Mammary epithelial cell (primary cell): ENCODE measurements at regions of chr2 and their contacts with region 1.

Region 1: GRCh38 chr2:109128048-109128465 is 948 bp upstream of the SH3RF3 start:
- DNase-seq: peak; percentile 50
- H3K4me3 ChIP-seq: peak overlapping the region; percentile 42 to 59 (median 56)
- H3K27ac ChIP-seq: no peak overlapping the region
- H3K4me1 ChIP-seq: peaks cover 42% of the 10 kb centered on the region
- H3K27me3 ChIP-seq: peaks cover 11% of the 10 kb centered on the region
- CTCF ChIP-seq: peak; percentile 72 to 80

Region 2: DNA sequence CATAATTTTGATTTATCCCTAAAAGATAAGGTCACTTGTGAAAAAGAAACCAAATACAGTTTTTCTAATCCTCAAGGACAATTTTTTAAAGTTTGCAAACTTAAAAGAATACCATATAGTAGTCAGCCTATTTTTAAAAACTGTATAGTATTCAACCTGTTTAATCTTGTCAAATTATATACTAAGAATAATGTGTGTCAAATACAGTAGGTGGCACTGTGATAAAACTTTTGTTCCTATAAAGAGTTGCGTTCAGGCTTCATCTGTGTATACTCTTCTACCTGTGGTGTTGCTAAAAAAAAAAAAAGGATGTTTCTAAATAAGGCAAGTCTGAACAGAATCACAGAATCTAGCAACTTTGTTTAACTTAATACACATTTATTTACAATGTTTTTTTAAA is 272.9 kb before region 1 on chr2:
- CTCF ChIA-PET with region 1: interaction called, 7 read pairs
- dilution Hi-C with region 1: no loop called
- in situ Hi-C with region 1: no loop called
- intact Hi-C with region 1: loop called (anchors 2 kb)
- DNase-seq: peak; percentile 37
- H3K4me3 ChIP-seq: no peak overlapping the region
- H3K27ac ChIP-seq: no peak overlapping the region
- H3K4me1 ChIP-seq: no peaks in the 10 kb centered on the region
- H3K27me3 ChIP-seq: no peaks in the 10 kb centered on the region
- CTCF ChIP-seq: peak; percentile 28 to 36

Region 3: GRCh38 chr2:108988796-108989713 is 139.0 kb before region 1 on chr2 and contains the start of gene EDAR:
- CTCF ChIA-PET with region 1: no interaction called
- dilution Hi-C with region 1: no loop called
- in situ Hi-C with region 1: no loop called
- intact Hi-C with region 1: loop called (anchors 10 kb)
- DNase-seq: peak; percentile 70
- H3K4me3 ChIP-seq: peak within 1 kb of the TSS; percentile 35 to 43 (median 39)
- H3K27ac ChIP-seq: no peak within 1 kb of the TSS
- H3K4me1 ChIP-seq: peaks cover 17% of the 10 kb centered on the region
- H3K27me3 ChIP-seq: no peaks in the 10 kb centered on the region
- CTCF ChIP-seq: peak; percentile 89 to 96
- total RNA-seq, gene EDAR: 0.38 to 2.2 TPM

Region 4: DNA sequence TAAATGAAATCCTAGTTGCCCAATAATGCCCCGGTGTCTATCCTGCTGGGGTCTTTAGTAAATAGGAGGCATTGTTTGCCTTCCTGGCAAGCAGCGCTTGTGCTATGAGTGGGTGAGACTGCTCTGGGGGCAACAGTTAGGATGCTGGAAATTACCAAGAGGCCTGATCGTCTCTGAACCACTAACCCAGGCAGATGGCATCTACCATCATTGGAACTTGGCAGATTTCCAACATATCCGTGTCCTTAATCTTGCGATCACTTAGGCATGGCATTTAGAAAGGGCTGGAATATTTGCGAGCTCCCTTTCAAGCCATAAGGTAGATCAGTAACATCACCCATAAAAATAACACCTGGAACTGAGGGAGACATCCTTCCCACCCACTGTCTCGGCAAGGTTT is 17.9 kb before region 1 on chr2:
- CTCF ChIA-PET with region 1: no interaction called
- dilution Hi-C with region 1: no loop called
- in situ Hi-C with region 1: no loop called
- intact Hi-C with region 1: no loop called
- DNase-seq: no peak
- H3K4me3 ChIP-seq: no peak overlapping the region
- H3K27ac ChIP-seq: no peak overlapping the region
- H3K4me1 ChIP-seq: peaks cover 5% of the 10 kb centered on the region
- H3K27me3 ChIP-seq: no peaks in the 10 kb centered on the region
- CTCF ChIP-seq: no peak

Region 5: DNA sequence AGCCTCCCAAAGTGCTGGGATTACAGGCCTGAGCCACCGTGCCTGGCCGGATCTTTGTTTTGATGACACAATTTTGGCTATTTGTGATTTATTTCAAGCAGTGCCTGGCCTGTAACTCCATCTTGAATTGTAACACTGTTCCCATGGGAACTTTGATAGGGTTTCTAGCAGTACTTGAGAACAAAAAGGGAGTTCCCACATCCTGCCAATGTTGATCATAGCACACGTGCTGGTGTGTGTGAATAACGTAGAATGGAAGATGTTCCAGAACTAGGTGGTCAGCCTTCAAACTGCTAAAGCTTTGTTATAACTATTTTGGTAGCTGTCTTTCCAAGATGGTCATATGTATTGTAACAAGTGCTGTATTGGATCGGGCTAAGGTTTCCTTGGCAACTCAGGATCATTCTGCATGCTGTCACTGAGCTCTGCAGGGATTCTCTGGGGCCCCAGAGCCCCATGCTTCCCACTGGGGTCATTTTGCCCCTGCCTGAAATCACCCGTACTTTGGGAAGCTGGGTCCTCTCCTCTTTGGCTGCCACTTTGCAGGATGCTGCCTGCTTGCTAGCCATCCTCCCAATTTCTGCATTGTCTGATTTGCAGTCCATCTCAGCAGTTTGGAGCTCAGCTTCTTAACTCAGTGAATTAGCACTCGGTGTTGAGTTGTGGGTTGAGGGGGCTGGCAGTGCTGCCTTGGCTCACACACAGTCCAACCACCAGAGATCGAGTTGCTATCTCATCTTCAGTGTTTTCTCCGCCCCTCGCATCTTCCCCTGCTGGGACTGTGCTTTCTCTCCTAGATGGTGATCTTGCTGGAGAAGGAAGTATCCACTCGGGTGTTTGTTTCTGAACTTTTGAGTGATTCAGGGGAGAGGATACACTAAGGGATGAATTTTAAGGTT is 27.7 kb after region 1 on chr2:
- CTCF ChIA-PET with region 1: no interaction called
- dilution Hi-C with region 1: no loop called
- in situ Hi-C with region 1: no loop called
- intact Hi-C with region 1: no loop called
- DNase-seq: no peak
- H3K4me3 ChIP-seq: no peak overlapping the region
- H3K27ac ChIP-seq: no peak overlapping the region
- H3K4me1 ChIP-seq: no peaks in the 10 kb centered on the region
- H3K27me3 ChIP-seq: peaks cover 18% of the 10 kb centered on the region
- CTCF ChIP-seq: no peak

Region 6: DNA sequence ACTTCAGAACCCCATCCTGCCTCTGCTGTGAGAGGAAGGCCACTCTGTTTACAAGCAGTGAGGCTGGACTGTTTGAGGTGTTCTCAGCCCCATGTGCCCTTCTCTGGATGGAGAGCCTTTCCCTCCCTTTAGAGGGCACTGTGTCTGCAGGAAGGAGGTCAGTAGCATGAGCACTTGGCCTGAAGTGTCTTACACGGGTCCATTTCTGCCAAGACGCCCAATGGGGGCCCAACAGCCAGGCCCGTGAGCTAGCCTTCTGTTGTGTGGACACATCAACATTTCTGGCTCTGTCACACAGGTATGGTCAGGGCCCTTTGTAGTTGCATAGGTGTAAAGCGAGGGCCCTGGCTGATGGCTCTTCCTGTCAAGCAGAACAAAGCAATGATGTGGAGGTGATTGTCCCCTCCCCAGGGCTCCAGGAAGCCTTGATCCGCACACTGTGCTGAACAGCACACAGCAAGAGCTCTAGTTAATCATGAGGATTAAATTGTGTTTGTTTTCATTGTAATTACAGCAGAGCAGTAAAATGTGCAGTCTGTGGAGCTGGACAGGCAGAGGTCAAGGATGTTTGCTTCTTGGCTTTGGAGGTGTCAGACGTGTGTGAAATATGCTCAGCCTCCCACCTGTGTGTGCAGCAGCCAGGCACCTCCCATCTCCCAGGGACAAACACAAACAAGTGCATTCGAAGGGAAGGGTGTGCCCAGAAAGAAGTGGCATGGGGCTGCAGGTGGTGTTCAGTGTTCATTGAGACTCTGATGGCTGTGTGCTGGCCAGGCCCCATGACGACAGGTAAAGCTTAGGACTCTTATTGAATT is 133.0 kb after region 1 on chr2:
- CTCF ChIA-PET with region 1: no interaction called
- dilution Hi-C with region 1: no loop called
- in situ Hi-C with region 1: no loop called
- intact Hi-C with region 1: loop called (anchors 5 kb)
- DNase-seq: peak; percentile 6
- H3K4me3 ChIP-seq: no peak overlapping the region
- H3K27ac ChIP-seq: no peak overlapping the region
- H3K4me1 ChIP-seq: no peaks in the 10 kb centered on the region
- H3K27me3 ChIP-seq: no peaks in the 10 kb centered on the region
- CTCF ChIP-seq: peak; percentile 23 to 52

Region 7: DNA sequence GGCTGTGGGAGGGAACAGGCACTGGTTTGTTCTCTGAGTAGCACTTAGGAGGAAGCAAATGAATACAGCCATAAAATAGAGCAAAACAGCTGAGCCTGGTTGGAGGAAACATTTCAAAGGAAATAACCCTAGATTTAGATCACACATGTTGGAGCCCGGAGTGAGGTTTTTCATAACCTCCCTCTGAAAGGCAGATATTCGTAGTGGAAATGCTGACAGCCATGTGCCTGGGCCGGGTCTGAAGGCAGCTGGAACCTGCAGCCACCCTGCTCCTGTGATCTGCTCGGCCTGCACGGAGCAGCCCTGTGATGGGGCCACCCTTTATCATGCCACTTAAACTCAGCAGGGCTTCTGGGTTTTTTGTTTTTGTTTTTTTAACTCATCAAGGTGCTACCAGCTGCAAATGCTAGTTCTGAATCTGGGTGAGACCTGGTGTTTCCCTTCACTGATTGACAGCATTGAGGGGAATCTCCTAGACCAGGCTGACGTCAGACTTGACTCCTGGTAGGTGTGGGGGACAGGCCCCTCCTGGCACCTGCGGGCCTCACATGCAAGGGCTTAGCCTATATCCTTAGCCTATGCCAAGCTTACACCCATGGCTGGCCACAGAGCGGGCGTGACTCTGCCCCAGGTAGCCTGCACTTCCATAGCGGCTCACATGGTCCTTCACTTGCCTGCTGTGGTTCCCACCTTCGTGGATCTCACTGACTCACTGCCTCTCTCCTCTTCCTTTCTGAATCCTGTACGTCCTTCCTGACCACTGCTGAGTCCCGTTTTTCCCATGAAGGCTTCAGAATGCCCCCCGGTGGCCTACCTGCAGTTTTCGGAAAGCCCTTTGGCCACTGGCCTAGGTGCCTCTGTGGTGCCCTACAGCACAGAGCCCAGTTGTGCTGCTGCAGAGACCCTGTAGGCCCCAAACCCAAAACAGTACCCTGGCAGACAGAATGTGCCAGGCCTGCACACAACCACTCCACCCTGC is 268.4 kb after region 1 on chr2:
- CTCF ChIA-PET with region 1: no interaction called
- dilution Hi-C with region 1: no loop called
- in situ Hi-C with region 1: no loop called
- intact Hi-C with region 1: loop called (anchors 5 kb)
- DNase-seq: no peak
- H3K4me3 ChIP-seq: no peak overlapping the region
- H3K27ac ChIP-seq: no peak overlapping the region
- H3K4me1 ChIP-seq: no peaks in the 10 kb centered on the region
- H3K27me3 ChIP-seq: peaks cover 6% of the 10 kb centered on the region
- CTCF ChIP-seq: peak in 1 of 2 donors; percentile 21

Region 8: DNA sequence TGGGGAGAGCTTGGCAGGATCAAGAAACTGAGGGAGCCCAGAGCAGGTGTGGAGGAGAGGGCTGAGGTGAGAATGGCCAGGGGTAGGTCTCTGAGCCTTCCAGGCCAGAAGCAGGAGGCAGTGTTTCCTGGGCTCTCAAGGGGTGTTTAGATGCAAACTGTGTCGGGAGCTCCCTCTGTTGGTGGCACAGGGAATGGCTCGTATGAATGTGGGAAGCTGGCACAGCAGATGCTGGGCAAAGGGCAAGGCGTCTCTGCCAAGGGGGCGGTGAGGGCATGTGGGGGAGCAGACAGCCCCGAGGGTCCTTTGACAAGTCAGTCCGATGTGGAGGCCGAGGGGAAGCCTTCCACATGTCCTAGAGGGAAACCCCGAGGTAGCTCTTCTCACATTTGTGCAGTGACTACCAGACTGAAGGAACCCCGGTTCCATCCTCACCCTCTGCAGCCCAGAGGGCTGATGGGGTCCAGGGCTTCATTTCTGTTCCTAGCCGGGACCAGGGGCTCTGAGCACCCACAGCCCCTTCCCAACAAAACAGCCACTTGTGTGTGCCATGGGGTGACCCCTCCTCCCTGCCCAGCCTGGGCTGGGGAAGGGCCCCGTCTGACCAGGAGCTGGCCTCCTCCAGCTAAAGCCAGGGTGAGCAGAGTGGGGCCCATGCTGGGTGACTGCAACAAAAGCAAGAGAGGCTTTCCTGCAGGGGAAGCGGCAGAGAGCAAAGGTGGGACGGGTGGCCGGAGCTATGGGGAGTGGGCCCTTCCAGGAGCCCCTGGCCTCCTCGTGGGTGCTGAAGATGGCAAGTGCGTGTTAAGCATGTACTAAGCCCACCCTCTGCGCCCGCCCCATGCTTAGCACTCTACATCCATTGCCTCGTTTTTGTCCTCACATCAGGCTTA is 382.3 kb after region 1 on chr2:
- CTCF ChIA-PET with region 1: interaction called, 3 read pairs
- dilution Hi-C with region 1: no loop called
- in situ Hi-C with region 1: loop called in 1 of 2 experiments (anchors 10 kb)
- intact Hi-C with region 1: loop called (anchors 2 kb)
- DNase-seq: peak; percentile 50
- H3K4me3 ChIP-seq: no peak overlapping the region
- H3K27ac ChIP-seq: no peak overlapping the region
- H3K4me1 ChIP-seq: peaks cover 5% of the 10 kb centered on the region
- H3K27me3 ChIP-seq: no peaks in the 10 kb centered on the region
- CTCF ChIP-seq: peak; percentile 89 to 97